CD4-positive, alpha-beta memory T cell (primary cell): ENCODE measurements at regions of chr12 and their contacts with region 1.

Region 1: DNA sequence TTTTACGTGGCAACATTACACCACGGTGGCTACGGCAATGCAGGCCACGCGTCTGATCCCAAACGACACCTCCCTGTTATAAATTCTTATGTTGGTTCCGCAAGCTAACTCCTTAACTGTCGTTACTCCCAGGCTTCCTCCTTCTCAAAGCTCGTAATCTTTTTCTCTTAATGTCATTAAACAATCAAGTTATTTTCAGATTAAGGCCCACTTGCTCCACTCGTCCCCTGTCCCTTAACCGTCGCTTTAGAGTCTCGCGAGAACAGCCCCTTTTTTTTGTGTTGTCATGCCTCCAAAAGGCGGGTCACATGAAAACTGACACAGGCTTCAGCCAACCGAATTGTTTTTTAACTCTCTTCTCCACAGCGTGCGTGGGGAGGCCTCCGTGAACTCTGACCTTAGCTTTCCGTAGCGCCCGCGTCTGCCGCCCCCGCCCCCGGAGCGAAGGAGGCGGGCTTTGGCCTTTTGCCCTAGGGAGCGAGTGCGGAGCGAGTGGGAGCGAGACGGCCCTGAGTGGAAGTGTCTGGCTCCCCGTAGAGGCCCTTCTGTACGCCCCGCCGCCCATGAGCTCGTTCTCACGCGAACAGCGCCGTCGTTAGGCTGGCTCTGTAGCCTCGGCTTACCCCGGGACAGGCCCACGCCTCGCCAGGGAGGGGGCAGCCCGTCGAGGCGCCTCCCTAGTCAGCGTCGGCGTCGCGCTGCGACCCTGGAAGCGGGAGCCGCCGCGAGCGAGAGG is at the start of gene CAND1:
- DNase-seq: peak; percentile 98 to 99 (median 99)
- H3K4me3 ChIP-seq: peak within 1 kb of the TSS; percentile 81 to 84
- H3K4me3 Mint-ChIP-seq: peak within 1 kb of the TSS; percentile 92 to 99 (median 98)
- H3K27ac ChIP-seq: peak within 1 kb of the TSS; percentile 97
- H3K27ac Mint-ChIP-seq: peak within 1 kb of the TSS; percentile 95 to 100 (median 99)
- H3K4me1 ChIP-seq: peaks cover 45% of the 10 kb centered on the region
- H3K4me1 Mint-ChIP-seq: peaks cover 28 to 52% (median 39%) of the 10 kb centered on the region in 4 donors
- H3K27me3 ChIP-seq: no peaks in the 10 kb centered on the region
- H3K27me3 Mint-ChIP-seq: no peaks in the 10 kb centered on the region
- total RNA-seq, gene CAND1: 124 TPM

Region 2: DNA sequence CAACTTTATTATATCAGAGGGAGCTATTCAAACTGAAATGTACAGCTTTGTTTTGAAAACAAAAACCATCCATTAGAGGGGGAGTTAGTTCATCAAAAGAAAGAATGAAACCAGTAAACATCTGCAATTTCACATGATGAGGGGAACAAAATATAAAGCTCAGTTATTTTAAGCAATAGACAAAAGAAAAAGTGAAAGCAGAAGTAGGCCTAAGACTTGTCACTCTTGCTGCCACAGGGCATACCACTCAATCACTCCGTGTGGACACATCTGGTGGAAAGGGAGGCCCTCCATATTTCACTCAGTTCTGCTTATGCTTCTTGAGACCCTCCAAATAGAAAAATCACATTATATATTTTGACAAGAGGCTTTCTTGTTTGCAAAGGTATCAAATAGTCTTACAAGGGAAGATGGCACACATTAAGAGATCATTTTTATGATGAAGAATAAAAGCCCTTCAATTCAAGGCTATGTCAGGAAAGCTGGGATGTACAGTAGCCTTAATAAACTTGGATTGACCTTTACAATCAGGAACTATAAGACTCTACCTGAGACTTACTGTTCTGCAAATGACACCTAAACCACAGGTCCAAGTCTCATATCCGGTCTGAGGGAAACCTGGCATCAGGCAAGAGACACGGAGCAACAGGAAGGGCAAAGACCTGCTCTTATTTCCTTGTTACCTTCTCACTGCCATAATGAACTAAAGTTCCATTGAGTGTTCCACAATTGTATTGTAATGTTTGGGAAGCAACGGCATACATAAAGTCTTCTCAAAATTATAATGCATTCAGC is 367.7 kb before region 1 on chr12:
- CTCF ChIA-PET with region 1: no interaction called
- POLR2A ChIA-PET with region 1: no interaction called
- intact Hi-C with region 1: loop called (anchors 5 kb)
- DNase-seq: peak in 2 of 5 donors; percentile 6 to 13
- H3K4me3 ChIP-seq: no peak overlapping the region
- H3K4me3 Mint-ChIP-seq: peak overlapping the region in 7 of 8 donors; percentile 54 to 72 (median 59)
- H3K27ac ChIP-seq: no peak overlapping the region
- H3K27ac Mint-ChIP-seq: peak overlapping the region; percentile 15 to 81 (median 66)
- H3K4me1 ChIP-seq: peaks cover 24% of the 10 kb centered on the region
- H3K4me1 Mint-ChIP-seq: peaks cover 15 to 36% (median 27%) of the 10 kb centered on the region in 4 donors
- H3K27me3 ChIP-seq: no peaks in the 10 kb centered on the region
- H3K27me3 Mint-ChIP-seq: no peaks in the 10 kb centered on the region

Region 3: DNA sequence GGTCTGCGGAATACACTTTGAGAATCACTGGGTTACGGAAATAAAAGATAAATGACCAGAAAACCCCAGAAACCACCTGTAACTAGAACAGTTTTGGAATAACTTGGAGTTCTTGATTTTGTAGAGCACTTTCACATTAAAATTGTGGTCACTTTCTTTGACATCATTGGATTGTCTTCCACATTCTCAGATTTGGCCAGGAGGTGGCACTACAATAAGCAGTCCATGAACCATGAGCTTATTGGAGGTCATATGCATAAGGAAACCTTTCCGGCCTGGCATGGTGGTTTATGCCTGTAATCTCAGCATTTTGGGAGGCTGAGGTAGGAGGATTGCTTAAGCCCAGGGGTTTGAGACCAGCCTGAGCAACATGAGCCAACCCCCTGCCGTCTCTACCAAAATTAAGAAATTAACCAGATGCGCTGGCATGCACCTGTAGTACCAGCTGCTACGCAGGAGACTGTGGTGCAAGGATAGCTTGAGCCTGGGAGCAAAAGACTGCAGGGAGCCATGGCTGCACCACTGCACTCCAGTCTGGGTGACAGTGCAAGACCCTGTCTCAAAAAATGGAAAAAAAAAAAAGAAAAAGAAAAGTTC is 107.6 kb before region 1 on chr12:
- CTCF ChIA-PET with region 1: interaction called, 6 read pairs
- POLR2A ChIA-PET with region 1: no interaction called
- intact Hi-C with region 1: loop called (anchors 5 kb)
- DNase-seq: peak; percentile 8 to 37 (median 18)
- H3K4me3 ChIP-seq: no peak overlapping the region
- H3K4me3 Mint-ChIP-seq: no peak overlapping the region
- H3K27ac ChIP-seq: no peak overlapping the region
- H3K27ac Mint-ChIP-seq: no peak overlapping the region
- H3K4me1 ChIP-seq: no peaks in the 10 kb centered on the region
- H3K4me1 Mint-ChIP-seq: no peaks in the 10 kb centered on the region
- H3K27me3 ChIP-seq: no peaks in the 10 kb centered on the region
- H3K27me3 Mint-ChIP-seq: peaks cover 2% of the 10 kb centered on the region in 2 donors

Region 4: DNA sequence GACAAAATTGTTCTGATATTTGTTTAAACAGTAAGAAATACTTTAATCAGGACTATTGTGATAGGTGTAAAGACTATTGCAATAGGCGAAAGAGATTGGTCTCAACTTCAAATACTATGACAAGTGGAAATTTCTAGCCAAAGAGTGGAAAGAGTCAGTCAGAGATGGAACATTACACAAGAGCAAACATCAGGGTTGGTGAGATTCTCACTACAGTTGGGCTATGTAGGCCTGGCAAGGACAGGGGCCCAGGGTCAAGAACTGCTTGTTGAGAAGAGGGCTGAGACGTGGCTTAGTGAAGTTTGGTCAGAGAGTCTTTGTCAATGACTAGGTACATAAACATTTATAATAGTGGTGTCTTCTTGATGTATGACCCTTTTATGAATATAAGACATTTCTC is 19.5 kb after region 1 on chr12:
- CTCF ChIA-PET with region 1: interaction called, 5 read pairs
- POLR2A ChIA-PET with region 1: interaction called, 13 read pairs
- intact Hi-C with region 1: no loop called
- DNase-seq: no peak
- H3K4me3 ChIP-seq: no peak overlapping the region
- H3K4me3 Mint-ChIP-seq: peak overlapping the region in 1 of 8 donors; percentile 50
- H3K27ac ChIP-seq: no peak overlapping the region
- H3K27ac Mint-ChIP-seq: peak overlapping the region in 5 of 7 donors; percentile 1 to 56 (median 12)
- H3K4me1 ChIP-seq: peaks cover 30% of the 10 kb centered on the region
- H3K4me1 Mint-ChIP-seq: peaks cover 43 to 60% (median 50%) of the 10 kb centered on the region in 4 donors
- H3K27me3 ChIP-seq: no peaks in the 10 kb centered on the region
- H3K27me3 Mint-ChIP-seq: no peaks in the 10 kb centered on the region

Region 5: DNA sequence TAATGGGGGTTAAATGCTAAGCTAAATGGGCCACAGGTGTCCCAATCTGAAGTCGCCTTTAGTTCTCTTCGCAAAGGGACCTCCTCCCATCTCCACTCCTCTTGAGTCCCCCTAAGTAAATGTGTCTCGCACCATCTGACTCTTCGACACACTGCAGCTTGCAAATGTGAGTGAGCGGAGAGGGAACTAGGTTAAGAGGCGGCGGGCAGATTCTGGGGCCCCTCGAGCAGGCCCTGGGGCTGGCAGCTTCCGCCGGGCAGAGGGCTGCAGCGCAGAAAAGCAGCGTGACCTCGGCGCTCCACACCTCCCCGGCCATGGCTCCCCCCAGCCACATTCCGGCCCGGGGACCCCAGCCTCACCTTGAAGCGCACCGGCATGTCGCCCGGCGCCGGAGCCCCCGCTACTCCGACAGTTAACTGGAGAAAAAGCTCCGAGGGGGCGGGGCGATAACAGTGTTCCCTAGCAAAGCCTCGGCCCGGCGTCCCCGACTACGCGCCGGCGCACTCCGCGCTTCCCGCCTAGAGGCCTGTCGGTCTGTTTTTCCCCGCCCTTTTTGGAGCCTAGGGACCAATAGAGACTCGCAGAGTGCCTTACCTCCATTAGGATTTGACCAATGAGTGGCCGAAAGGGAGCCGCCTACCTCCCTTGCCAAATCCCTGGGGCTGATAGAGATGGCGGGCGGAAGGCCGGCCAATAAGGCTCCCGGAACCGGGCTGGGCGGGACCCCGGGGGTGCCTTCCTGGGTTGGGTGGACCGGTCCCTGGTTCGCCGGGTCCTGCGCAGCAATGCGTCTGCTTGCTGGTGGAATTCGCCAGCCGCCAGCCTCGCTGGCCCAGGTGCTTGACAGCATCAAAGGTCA is 1063.0 kb after region 1 on chr12 and contains the start of gene MDM1:
- CTCF ChIA-PET with region 1: no interaction called
- POLR2A ChIA-PET with region 1: no interaction called
- intact Hi-C with region 1: loop called (anchors 1 kb)
- DNase-seq: peak; percentile 95 to 98 (median 96)
- H3K4me3 ChIP-seq: peak within 1 kb of the TSS; percentile 60 to 77
- H3K4me3 Mint-ChIP-seq: peak within 1 kb of the TSS; percentile 88 to 93 (median 90)
- H3K27ac ChIP-seq: peak within 1 kb of the TSS; percentile 58
- H3K27ac Mint-ChIP-seq: peak within 1 kb of the TSS; percentile 64 to 95 (median 91)
- H3K4me1 ChIP-seq: peaks cover 30% of the 10 kb centered on the region
- H3K4me1 Mint-ChIP-seq: peaks cover 32 to 49% (median 42%) of the 10 kb centered on the region in 4 donors
- H3K27me3 ChIP-seq: no peaks in the 10 kb centered on the region
- H3K27me3 Mint-ChIP-seq: peaks cover 0 to 2% of the 10 kb centered on the region in 2 donors
- total RNA-seq, gene MDM1: 27.0 to 29.4 TPM

Region 6: DNA sequence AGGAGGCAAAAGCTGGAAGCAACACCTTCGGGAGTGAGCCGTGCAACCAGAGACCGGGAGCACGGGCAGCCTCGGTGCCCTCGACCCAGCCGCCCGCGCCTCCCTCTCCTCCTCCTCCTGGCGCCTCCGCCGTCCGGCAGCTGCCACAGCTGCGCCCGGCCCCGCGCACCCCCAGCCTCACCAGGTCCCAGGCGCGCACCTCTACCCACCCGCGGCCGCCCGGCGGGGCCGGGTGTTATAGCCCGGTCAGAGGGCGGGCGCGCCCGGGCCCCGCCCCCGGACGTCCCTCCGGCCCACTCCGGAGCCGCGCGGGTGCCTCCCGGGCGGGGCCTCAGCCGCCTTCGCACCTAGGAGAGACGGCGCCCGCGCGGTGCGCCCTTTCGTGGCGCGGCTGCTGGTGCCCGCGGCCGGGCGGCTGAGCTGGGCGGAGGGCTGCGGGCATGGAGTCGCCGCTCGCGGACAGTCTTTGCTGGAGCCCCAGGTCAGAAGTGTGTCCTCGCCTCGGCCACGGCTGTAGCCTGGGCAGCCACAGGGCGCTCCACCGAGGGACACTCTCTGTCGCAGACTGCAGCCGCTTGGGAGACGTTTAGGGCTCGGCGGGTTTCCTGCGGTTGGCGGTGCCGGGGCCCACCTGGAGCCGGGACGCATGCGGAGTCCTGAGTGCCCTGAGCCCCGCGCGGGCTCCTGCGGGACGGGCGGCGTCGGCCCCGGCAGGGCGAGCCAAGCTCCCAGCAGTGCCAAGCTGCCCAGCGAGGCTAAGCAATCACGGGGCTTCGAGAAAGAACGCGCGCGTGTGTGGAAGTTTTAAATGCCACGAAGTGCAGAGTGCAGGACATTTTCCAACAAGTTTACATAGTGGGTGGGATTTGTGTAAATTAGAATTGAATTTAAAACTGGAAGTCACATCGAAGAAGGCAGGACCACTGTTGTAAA is 1664.2 kb after region 1 on chr12 and contains the start of gene CPM:
- CTCF ChIA-PET with region 1: no interaction called
- POLR2A ChIA-PET with region 1: no interaction called
- intact Hi-C with region 1: loop called (anchors 2 kb)
- DNase-seq: peak; percentile 56 to 73 (median 70)
- H3K4me3 ChIP-seq: peak within 1 kb of the TSS; percentile 4 to 60
- H3K4me3 Mint-ChIP-seq: peak within 1 kb of the TSS; percentile 82 to 93 (median 89)
- H3K27ac ChIP-seq: no peak within 1 kb of the TSS
- H3K27ac Mint-ChIP-seq: peak within 1 kb of the TSS in 5 of 7 donors; percentile 14 to 78 (median 52)
- H3K4me1 ChIP-seq: peaks cover 13% of the 10 kb centered on the region
- H3K4me1 Mint-ChIP-seq: peaks cover 5 to 9% (median 8%) of the 10 kb centered on the region in 4 donors
- H3K27me3 ChIP-seq: peaks cover 8% of the 10 kb centered on the region
- H3K27me3 Mint-ChIP-seq: peaks cover 3 to 7% of the 10 kb centered on the region in 2 donors
- total RNA-seq, gene CPM: 2.0 to 3.1 TPM